CD4-positive, alpha-beta memory T cell (primary cell): ENCODE measurements at regions of chr12 and their contacts with region 1.

Region 1: GRCh38 chr12:123232807-123233543 is at the starts of genes MPHOSPH9 and MTRFR:
- DNase-seq: peak; percentile 99 to 100 (median 100)
- H3K4me3 ChIP-seq: peak within 1 kb of the TSS; percentile 82 to 99
- H3K4me3 Mint-ChIP-seq: peak within 1 kb of the TSS; percentile 96 to 100 (median 99)
- H3K27ac ChIP-seq: peak within 1 kb of the TSS; percentile 88
- H3K27ac Mint-ChIP-seq: peak within 1 kb of the TSS; percentile 96 to 100 (median 99)
- H3K4me1 ChIP-seq: peaks cover 86% of the 10 kb centered on the region
- H3K4me1 Mint-ChIP-seq: peaks cover 40 to 81% (median 60%) of the 10 kb centered on the region in 4 donors
- H3K27me3 ChIP-seq: no peaks in the 10 kb centered on the region
- H3K27me3 Mint-ChIP-seq: no peaks in the 10 kb centered on the region
- total RNA-seq, gene MPHOSPH9: 57.9 to 62.7 TPM
- total RNA-seq, gene MTRFR: 46.1 to 48.8 TPM

Region 2: DNA sequence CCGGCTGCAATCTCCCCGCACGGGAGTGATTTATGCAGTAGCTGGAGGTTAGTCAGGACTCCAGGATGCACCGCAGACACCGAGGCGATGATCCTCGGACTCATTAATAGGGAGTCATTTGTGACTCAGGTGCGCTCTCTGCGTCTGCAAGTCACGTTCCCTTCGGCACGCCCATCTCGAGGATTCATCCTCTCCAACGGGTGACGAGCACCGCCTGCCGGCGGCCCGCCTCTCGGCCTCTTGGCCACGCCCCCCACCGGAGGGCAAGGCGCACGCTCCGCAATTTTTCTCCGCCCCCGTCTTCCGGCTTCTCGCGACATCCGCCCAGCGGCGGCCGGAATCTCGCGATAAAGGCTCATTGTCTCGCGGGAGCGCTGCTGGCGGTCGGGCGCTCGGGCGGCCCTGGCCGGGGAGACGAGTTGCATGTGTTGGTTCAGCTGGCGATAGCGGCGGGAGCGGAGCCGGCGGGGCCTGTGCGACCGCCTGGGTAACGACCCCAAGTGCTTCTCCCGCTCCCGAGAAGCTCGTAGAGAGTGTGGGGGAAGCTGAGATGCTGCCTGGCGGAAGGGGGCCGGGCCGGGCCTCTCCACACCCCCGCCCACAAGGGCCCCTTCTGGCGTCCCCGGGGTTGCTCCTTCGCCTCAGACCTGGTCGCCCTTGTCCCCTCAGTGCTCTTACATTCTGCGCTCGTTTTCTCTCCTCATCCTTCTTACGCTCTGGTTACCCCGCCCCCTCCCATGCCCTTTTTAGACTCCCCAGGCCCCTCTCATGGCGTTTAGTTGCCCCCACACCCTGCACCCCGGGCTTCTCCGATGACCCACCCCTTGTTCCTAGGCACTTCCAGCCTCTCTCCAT is 480.3 kb before region 1 on chr12 and contains the start of gene DENR:
- CTCF ChIA-PET with region 1: no interaction called
- POLR2A ChIA-PET with region 1: interaction called, 13 read pairs
- intact Hi-C with region 1: no loop called
- DNase-seq: peak; percentile 99 to 100 (median 99)
- H3K4me3 ChIP-seq: peak within 1 kb of the TSS; percentile 64 to 77
- H3K4me3 Mint-ChIP-seq: peak within 1 kb of the TSS; percentile 93 to 97 (median 94)
- H3K27ac ChIP-seq: peak within 1 kb of the TSS; percentile 87
- H3K27ac Mint-ChIP-seq: peak within 1 kb of the TSS; percentile 90 to 99 (median 97)
- H3K4me1 ChIP-seq: peaks cover 19% of the 10 kb centered on the region
- H3K4me1 Mint-ChIP-seq: peaks cover 35 to 60% (median 47%) of the 10 kb centered on the region in 4 donors
- H3K27me3 ChIP-seq: no peaks in the 10 kb centered on the region
- H3K27me3 Mint-ChIP-seq: no peaks in the 10 kb centered on the region
- total RNA-seq, gene DENR: 47.8 to 49.1 TPM

Region 3: GRCh38 chr12:122951979-122952892 is 280.7 kb before region 1 on chr12:
- CTCF ChIA-PET with region 1: interaction called, 9 read pairs
- POLR2A ChIA-PET with region 1: interaction called, 3 read pairs
- intact Hi-C with region 1: loop called (anchors 1 kb)
- DNase-seq: peak; percentile 62 to 69 (median 65)
- H3K4me3 ChIP-seq: no peak overlapping the region
- H3K4me3 Mint-ChIP-seq: no peak overlapping the region
- H3K27ac ChIP-seq: no peak overlapping the region
- H3K27ac Mint-ChIP-seq: peak overlapping the region in 4 of 7 donors; percentile 7 to 37 (median 16)
- H3K4me1 ChIP-seq: peaks cover 6% of the 10 kb centered on the region
- H3K4me1 Mint-ChIP-seq: peaks cover 1 to 6% (median 3%) of the 10 kb centered on the region in 4 donors
- H3K27me3 ChIP-seq: no peaks in the 10 kb centered on the region
- H3K27me3 Mint-ChIP-seq: no peaks in the 10 kb centered on the region

Region 4: DNA sequence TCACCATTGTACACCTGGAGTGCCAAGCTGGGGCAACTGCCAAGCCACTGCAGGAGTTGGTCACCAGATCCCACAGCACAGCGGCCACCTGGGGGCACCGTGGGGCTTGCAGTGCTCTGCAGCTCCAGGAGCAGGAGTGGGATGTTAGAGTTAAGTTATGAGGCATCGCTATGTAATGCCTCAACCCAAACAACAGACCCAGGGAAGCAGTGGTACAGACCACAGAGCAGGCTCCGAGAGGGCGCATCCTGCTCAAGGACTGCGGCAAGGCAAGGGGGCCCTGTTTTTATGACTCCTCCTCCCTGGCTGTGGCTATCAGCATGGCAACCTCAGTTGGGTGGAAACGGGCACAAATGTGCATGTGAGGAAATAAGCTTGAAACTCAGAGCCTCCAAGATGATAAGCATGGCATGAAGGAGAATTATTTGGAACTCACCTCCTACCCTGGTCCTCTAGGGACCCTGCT is 189.4 kb before region 1 on chr12:
- CTCF ChIA-PET with region 1: interaction called, 204 read pairs
- POLR2A ChIA-PET with region 1: interaction called, 32 read pairs
- intact Hi-C with region 1: loop called (anchors 1 kb)
- DNase-seq: peak; percentile 58 to 69 (median 69)
- H3K4me3 ChIP-seq: no peak overlapping the region
- H3K4me3 Mint-ChIP-seq: peak overlapping the region in 4 of 8 donors; percentile 15 to 64 (median 46)
- H3K27ac ChIP-seq: no peak overlapping the region
- H3K27ac Mint-ChIP-seq: peak overlapping the region in 6 of 7 donors; percentile 8 to 87 (median 73)
- H3K4me1 ChIP-seq: peaks cover 11% of the 10 kb centered on the region
- H3K4me1 Mint-ChIP-seq: peaks cover 9 to 27% (median 16%) of the 10 kb centered on the region in 4 donors
- H3K27me3 ChIP-seq: no peaks in the 10 kb centered on the region
- H3K27me3 Mint-ChIP-seq: no peaks in the 10 kb centered on the region

Region 5: GRCh38 chr12:123200414-123200813 is 32.6 kb before region 1 on chr12:
- CTCF ChIA-PET with region 1: interaction called, 21 read pairs
- POLR2A ChIA-PET with region 1: interaction called, 19 read pairs
- intact Hi-C with region 1: loop called (anchors 5 kb)
- DNase-seq: peak in 2 of 5 donors; percentile 0 to 3
- H3K4me3 ChIP-seq: no peak overlapping the region
- H3K4me3 Mint-ChIP-seq: no peak overlapping the region
- H3K27ac ChIP-seq: peak overlapping the region; percentile 9
- H3K27ac Mint-ChIP-seq: peak overlapping the region; percentile 36 to 94 (median 71)
- H3K4me1 ChIP-seq: peaks cover 10% of the 10 kb centered on the region
- H3K4me1 Mint-ChIP-seq: peaks cover 10 to 15% (median 13%) of the 10 kb centered on the region in 4 donors
- H3K27me3 ChIP-seq: no peaks in the 10 kb centered on the region
- H3K27me3 Mint-ChIP-seq: no peaks in the 10 kb centered on the region

Region 6: DNA sequence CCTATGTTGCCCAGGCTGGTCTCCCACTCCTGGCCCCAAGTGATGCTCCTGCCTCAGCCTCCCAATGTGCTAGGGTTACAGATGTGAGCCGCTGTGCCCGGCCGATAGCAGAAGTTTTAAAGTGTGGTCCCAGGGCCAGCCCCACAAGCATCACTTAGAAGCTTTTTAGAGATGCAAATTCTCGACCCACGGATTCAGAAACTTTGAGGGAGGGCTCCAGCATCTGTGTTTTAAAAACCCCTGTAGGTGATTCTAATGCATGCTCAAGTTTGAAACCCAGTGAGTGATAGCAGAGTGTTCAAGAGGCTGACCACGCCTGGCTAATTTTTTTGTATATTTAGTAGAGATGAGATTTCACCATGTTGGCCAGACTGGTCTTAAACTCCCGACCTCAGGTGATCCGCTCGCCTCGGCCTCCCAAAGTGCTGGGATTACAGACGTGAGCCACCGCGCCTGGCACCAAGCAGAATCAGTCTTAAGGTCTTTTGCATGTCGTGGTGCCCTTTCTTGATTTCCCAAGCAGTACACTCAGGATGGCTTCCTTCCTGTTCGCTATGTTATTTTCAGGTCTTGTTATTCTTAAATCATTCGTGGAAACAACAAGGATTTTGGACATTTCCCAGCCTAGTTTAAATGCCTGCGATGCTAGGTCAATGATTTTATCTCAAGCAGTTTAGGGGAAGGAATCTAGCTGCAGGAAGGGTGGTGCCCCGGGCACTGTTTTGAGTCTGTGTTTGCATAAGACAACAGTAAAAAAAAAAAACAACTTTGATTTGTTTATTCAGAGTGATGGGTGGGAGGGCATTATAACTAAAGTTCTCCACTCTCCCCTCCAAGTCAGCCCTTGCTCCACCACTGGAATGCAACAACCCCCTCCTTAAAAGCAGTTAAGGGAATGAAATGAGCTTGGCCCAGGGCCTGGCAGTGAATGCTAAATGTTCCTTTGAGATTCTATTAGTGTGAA is 212.7 kb after region 1 on chr12:
- CTCF ChIA-PET with region 1: no interaction called
- POLR2A ChIA-PET with region 1: interaction called, 11 read pairs
- intact Hi-C with region 1: no loop called
- DNase-seq: no peak
- H3K4me3 ChIP-seq: no peak overlapping the region
- H3K4me3 Mint-ChIP-seq: peak overlapping the region; percentile 63 to 75 (median 72)
- H3K27ac ChIP-seq: peak overlapping the region; percentile 18
- H3K27ac Mint-ChIP-seq: peak overlapping the region; percentile 77 to 95 (median 86)
- H3K4me1 ChIP-seq: peaks cover 38% of the 10 kb centered on the region
- H3K4me1 Mint-ChIP-seq: peaks cover 20 to 42% (median 34%) of the 10 kb centered on the region in 4 donors
- H3K27me3 ChIP-seq: no peaks in the 10 kb centered on the region
- H3K27me3 Mint-ChIP-seq: no peaks in the 10 kb centered on the region

Region 7: GRCh38 chr12:123972457-123973401 is 739.8 kb after region 1 on chr12 and contains the starts of genes CCDC92 and ZNF664:
- CTCF ChIA-PET with region 1: no interaction called
- POLR2A ChIA-PET with region 1: no interaction called
- intact Hi-C with region 1: loop called (anchors 2 kb)
- DNase-seq: peak; percentile 91 to 96 (median 94)
- H3K4me3 ChIP-seq: peak within 1 kb of the TSS; percentile 2 to 54
- H3K4me3 Mint-ChIP-seq: peak within 1 kb of the TSS; percentile 91 to 98 (median 94)
- H3K27ac ChIP-seq: peak within 1 kb of the TSS; percentile 44
- H3K27ac Mint-ChIP-seq: peak within 1 kb of the TSS; percentile 91 to 99 (median 95)
- H3K4me1 ChIP-seq: peaks cover 21% of the 10 kb centered on the region
- H3K4me1 Mint-ChIP-seq: peaks cover 26 to 48% (median 31%) of the 10 kb centered on the region in 4 donors
- H3K27me3 ChIP-seq: no peaks in the 10 kb centered on the region
- H3K27me3 Mint-ChIP-seq: no peaks in the 10 kb centered on the region
- total RNA-seq, gene CCDC92: 32.1 to 35.6 TPM
- total RNA-seq, gene ZNF664: 54.0 to 57.9 TPM